H1 (cell line): ENCODE measurements at regions of chr15 and their contacts with region 1.

Region 1: DNA sequence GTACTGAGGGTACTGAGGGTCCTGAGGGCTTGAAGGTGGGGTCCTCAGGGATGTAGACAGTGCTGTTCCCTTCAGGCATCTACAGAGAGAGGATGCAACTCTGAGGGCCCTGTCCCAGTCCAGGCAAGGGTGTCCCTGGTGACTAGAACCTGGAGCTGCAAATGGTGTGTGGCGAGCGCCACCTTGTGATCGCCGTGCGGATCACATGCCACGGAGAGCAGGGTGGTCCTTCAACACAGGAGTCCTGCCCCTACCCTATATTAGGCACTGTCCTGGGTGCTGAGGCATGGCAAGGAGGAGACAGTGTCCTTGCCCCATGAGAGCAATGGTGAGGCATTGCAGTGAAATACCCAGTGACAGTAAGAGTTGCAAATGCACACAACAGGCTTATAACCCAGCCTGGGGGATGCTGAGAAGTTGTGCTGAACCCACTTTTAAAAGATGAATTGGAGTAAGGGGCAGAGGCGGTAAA is 23.6 kb downstream of the RHCG start:
- DNase-seq: peak; percentile 79 to 95
- H3K4me3 ChIP-seq: no peak overlapping the region
- H3K27ac ChIP-seq: no peak overlapping the region
- H3K4me1 ChIP-seq: peaks cover 5 to 15% (median 11%) of the 10 kb centered on the region in 4 experiments
- H3K27me3 ChIP-seq: no peaks in the 10 kb centered on the region; a peak in 3 of 7 replicates
- CTCF ChIP-seq: peak; percentile 98 to 100 (median 99)
- EP300 ChIP-seq: no peak
- POLR2A ChIP-seq: no peak
- RAD21 ChIP-seq: peak; percentile 98 to 100

Region 2: DNA sequence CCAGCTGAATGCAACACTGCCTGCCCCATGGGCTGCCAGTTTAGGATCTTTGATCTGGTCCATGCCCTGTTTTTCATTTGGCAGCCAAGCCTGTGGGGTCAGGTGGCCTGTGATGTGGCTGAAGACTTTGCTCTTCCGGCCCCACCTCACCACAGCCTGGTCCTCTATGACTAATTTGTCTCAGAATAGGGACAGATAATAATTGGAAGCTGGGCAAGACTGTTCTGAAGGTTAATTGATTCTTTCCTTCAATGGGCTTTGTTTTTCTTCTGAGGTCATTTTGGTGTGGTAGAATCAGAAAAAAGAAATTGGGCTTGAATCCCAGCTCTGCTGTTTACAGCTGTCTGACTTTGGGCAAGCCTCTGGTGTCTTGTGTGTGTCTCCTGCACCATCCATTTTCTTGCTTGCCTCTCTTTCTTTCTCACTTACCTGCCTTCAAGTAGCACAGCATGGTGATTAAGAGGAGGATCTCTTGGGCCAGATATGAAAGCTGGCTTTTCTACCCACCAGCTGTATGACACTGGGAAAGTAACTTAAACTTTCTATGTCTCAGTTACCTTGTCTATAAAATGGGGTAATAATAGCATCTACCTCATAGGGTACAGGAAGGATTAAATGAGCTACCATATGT is 360.4 kb before region 1 on chr15:
- CTCF ChIA-PET with region 1: no interaction called
- POLR2A ChIA-PET with region 1: no interaction called
- DNase-seq: no peak
- H3K4me3 ChIP-seq: no peak overlapping the region
- H3K27ac ChIP-seq: no peak overlapping the region
- H3K4me1 ChIP-seq: peaks cover 12 to 35% (median 16%) of the 10 kb centered on the region in 4 experiments
- H3K27me3 ChIP-seq: peaks cover 0 to 1% (median 0%) of the 10 kb centered on the region in 4 experiments; a peak in 1 of 7 replicates
- CTCF ChIP-seq: no peak
- EP300 ChIP-seq: no peak
- POLR2A ChIP-seq: no peak
- RAD21 ChIP-seq: no peak

Region 3: GRCh38 chr15:89334510-89335288 is 138.1 kb before region 1 on chr15 and contains the start of gene POLG:
- CTCF ChIA-PET with region 1: interaction called, 12 read pairs
- POLR2A ChIA-PET with region 1: no interaction called
- DNase-seq: peak; percentile 98 to 99
- H3K4me3 ChIP-seq: peak within 1 kb of the TSS; percentile 79 to 93 (median 86)
- H3K27ac ChIP-seq: peak within 1 kb of the TSS; percentile 85
- H3K4me1 ChIP-seq: peaks cover 0 to 16% (median 3%) of the 10 kb centered on the region in 4 experiments; a peak in 4 of 7 replicates
- H3K27me3 ChIP-seq: no peaks in the 10 kb centered on the region; a peak in 1 of 7 replicates
- CTCF ChIP-seq: no peak
- EP300 ChIP-seq: peak in 1 of 2 experiments; percentile 100; a peak in 2 of 3 replicates
- POLR2A ChIP-seq: peak in 1 of 2 experiments; percentile 94; a peak in 2 of 3 replicates
- RAD21 ChIP-seq: no peak
- total RNA-seq, gene POLG: 52.3 and 53.4 TPM in 2 replicates

Region 4: GRCh38 chr15:89430530-89431341 is 42.1 kb before region 1 on chr15:
- CTCF ChIA-PET with region 1: interaction called, 207 read pairs
- POLR2A ChIA-PET with region 1: interaction called, 3 read pairs
- DNase-seq: peak in 1 of 2 experiments; percentile 100
- H3K4me3 ChIP-seq: peak overlapping the region in 3 of 4 experiments; percentile 29 to 54 (median 41); a peak in 7 of 8 replicates
- H3K27ac ChIP-seq: no peak overlapping the region
- H3K4me1 ChIP-seq: peaks cover 0 to 9% (median 2%) of the 10 kb centered on the region in 4 experiments; a peak in 3 of 7 replicates
- H3K27me3 ChIP-seq: peaks cover 0 to 22% (median 13%) of the 10 kb centered on the region in 4 experiments; a peak in 6 of 7 replicates
- CTCF ChIP-seq: peak; percentile 97 to 99 (median 98)
- EP300 ChIP-seq: no peak
- POLR2A ChIP-seq: no peak
- RAD21 ChIP-seq: peak; percentile 84 to 90

Region 5: DNA sequence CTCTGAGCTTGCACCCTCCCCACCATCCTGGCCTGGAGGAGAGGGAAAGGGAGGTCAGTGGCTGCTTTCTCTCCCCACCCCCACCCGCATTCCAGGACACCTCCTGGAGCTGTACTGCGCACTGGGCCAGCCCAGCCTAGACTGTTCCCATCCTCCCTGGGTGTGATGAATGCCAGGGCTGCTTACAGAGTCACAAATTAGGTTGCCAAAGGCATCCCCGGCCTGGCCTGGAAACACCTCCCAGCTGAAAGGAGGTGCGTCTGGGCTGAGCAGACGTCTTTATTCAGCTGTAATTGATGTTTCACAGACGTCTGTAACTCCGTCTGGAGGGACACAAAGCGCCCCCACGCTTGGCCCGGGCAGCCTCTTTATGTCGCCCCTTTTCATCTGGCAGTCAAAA is 24.0 kb before region 1 on chr15:
- CTCF ChIA-PET with region 1: interaction called, 518 read pairs
- POLR2A ChIA-PET with region 1: interaction called, 5 read pairs
- DNase-seq: peak in 1 of 2 experiments; percentile 35
- H3K4me3 ChIP-seq: no peak overlapping the region
- H3K27ac ChIP-seq: no peak overlapping the region
- H3K4me1 ChIP-seq: peaks cover 2 to 22% (median 16%) of the 10 kb centered on the region in 4 experiments
- H3K27me3 ChIP-seq: peaks cover 0 to 2% (median 0%) of the 10 kb centered on the region in 4 experiments; a peak in 3 of 7 replicates
- CTCF ChIP-seq: no peak
- EP300 ChIP-seq: no peak
- POLR2A ChIP-seq: no peak
- RAD21 ChIP-seq: no peak

Region 6: DNA sequence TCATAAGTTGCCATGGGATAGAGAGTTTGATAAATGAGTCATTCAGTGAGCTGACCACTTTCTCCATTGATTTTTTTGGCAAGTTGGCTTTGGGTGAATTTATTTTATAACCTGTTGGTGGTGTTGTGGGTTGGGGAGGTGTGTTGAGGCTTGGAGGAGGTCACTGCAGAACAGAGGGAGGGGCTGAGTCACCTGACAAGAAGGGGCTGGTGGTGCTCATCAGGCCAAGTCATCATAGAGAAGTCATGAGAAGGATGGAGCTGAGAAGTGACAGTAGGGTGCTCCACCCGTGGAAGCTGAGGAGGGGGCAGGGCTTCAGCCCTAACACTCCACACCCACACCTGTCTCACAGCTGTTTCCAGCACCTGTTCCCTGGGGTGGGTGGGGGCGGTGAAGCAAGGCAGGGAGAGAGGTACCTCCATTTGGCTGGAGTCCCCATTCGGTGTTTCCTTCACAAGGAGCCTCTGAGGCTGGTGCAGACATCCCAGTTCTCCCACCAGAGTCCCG is 13.1 kb after region 1 on chr15:
- CTCF ChIA-PET with region 1: interaction called, 187 read pairs
- POLR2A ChIA-PET with region 1: interaction called, 3 read pairs
- DNase-seq: no peak
- H3K4me3 ChIP-seq: no peak overlapping the region
- H3K27ac ChIP-seq: no peak overlapping the region
- H3K4me1 ChIP-seq: peaks cover 0 to 7% (median 0%) of the 10 kb centered on the region in 4 experiments; a peak in 3 of 7 replicates
- H3K27me3 ChIP-seq: no peaks in the 10 kb centered on the region; a peak in 1 of 7 replicates
- CTCF ChIP-seq: no peak
- EP300 ChIP-seq: no peak
- POLR2A ChIP-seq: no peak
- RAD21 ChIP-seq: no peak